OCI-LY7 (cell line): ENCODE measurements at regions of chr10 and their contacts with region 1.

Region 1: GRCh38 chr10:102917962-102918816 is at the start of gene CNNM2:
- DNase-seq: peak; percentile 100
- H3K4me3 ChIP-seq: peak within 1 kb of the TSS; percentile 96
- H3K27ac ChIP-seq: peak within 1 kb of the TSS; percentile 46
- H3K4me1 ChIP-seq: peaks cover 33% of the 10 kb centered on the region
- CTCF ChIP-seq: peak; percentile 52; the same call in 1 of the 2 replicates
- total RNA-seq, gene CNNM2: 5.8 and 7.2 TPM in 2 replicates

Region 2: DNA sequence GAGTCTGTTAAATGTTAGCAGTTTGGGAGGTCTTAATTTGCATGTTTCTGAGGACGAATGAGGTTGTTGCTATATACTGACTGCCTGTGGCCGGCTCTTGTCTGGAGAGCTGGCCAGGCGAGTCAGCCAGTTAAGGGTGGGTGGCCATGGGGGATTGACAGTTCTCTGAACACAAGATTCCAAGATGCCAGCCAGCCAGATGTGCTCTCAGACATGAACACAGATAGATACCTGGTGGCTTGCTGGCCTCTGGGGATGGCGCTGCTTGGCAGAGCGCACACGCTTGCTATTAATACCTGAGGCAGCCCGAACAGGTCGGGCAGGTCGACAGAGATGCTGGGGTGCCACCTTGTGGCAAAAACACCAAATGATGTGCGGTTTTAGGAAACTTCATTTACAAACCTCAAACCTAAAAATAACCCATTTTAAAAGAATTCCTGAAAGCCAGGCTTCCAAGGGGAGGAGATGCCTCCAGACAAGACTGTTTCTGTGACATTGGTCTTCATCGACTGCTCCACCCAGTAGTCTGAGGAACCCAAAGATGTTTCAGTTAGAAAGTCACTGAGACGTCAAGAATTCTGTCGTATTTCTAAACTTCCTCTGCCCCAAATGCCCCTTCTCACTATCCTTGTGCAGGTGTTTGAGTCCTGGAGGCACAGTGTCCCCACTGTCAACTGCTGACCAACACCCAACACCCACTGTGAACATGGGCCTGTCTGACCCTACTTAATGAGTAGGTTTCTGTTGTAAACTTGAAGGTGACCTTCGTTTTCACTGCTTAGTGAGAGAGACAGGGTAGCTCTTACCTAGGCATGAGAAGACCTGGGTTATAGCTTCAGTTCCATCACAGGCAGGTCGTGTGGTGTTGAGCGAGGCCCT is 151.5 kb after region 1 on chr10:
- CTCF ChIA-PET with region 1: no interaction called
- POLR2A ChIA-PET with region 1: interaction called, 6 read pairs
- intact Hi-C with region 1: loop called (anchors 1 kb)
- DNase-seq: peak; percentile 81
- H3K4me3 ChIP-seq: no peak overlapping the region
- H3K27ac ChIP-seq: peak overlapping the region; percentile 7
- H3K4me1 ChIP-seq: peaks cover 21% of the 10 kb centered on the region
- CTCF ChIP-seq: peak; percentile 95

Region 3: GRCh38 chr10:103192451-103193106 is 274.4 kb after region 1 on chr10:
- CTCF ChIA-PET with region 1: no interaction called
- POLR2A ChIA-PET with region 1: no interaction called
- intact Hi-C with region 1: loop called (anchors 5 kb)
- DNase-seq: peak; percentile 91
- H3K4me3 ChIP-seq: peak overlapping the region; percentile 91
- H3K27ac ChIP-seq: peak overlapping the region; percentile 77
- H3K4me1 ChIP-seq: peaks cover 43% of the 10 kb centered on the region
- CTCF ChIP-seq: no peak

Region 4: DNA sequence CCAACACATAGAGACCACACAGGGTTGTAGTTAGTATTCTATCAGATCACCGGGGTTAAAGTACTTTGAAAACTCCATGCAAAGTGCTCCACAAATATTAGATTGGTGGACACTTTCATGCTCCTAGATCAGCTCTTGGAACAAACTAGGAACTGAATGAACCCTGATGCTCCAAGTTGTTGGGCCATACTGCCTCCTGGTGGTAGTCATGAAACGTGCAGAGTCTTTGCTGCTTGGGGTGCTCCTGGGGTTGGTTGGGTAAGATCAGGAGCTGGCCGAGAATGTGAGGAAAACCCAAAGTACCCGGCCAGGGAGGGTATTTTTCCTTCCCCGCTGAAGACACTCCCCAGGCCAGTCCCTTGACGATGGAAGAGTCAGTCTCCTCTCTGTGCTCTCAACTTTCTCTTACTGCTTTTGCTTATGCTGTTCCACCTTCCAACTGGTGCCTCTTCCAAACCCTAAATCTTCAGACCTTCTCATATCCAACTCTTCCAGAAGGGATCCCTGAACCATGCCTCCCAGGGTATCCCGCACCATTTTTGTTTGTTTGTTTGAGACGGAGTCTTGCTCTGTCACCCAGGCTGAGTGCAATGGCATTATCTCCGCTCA is 326.6 kb after region 1 on chr10:
- CTCF ChIA-PET with region 1: interaction called, 6 read pairs
- POLR2A ChIA-PET with region 1: no interaction called
- intact Hi-C with region 1: loop called (anchors 1 kb)
- DNase-seq: peak; percentile 77
- H3K4me3 ChIP-seq: no peak overlapping the region
- H3K27ac ChIP-seq: no peak overlapping the region
- H3K4me1 ChIP-seq: peaks cover 8% of the 10 kb centered on the region
- CTCF ChIP-seq: peak; percentile 97

Region 5: DNA sequence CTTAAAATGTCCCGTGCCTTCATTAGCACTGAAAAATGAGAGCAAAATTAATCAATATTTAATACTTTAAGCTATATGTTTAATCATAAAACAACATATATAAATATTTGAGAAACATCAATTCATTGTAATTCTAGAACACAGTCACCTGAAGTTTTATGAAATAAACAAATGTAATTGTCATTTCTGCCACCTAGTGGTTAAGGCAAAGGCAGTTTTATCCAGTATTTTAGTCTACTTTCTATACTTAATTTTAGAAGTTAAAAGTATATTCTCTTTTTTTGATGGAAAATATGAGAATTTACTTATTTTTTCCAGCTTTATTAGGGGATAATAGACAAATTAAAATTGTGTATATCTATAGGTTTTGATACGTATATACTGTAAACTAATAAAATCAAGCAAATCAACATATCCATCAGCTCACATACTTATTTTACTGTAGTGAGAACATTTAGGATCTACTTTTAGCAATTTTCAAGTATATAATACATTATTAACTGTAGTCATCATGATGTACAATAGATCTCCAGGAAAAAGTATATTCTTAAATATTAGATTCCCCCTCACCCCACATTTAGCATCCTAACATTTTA is 415.8 kb after region 1 on chr10:
- CTCF ChIA-PET with region 1: no interaction called
- POLR2A ChIA-PET with region 1: interaction called, 3 read pairs
- intact Hi-C with region 1: loop called (anchors 5 kb)
- DNase-seq: peak; percentile 50
- H3K4me3 ChIP-seq: no peak overlapping the region
- H3K27ac ChIP-seq: no peak overlapping the region
- H3K4me1 ChIP-seq: no peaks in the 10 kb centered on the region
- CTCF ChIP-seq: peak; percentile 94

Region 6: DNA sequence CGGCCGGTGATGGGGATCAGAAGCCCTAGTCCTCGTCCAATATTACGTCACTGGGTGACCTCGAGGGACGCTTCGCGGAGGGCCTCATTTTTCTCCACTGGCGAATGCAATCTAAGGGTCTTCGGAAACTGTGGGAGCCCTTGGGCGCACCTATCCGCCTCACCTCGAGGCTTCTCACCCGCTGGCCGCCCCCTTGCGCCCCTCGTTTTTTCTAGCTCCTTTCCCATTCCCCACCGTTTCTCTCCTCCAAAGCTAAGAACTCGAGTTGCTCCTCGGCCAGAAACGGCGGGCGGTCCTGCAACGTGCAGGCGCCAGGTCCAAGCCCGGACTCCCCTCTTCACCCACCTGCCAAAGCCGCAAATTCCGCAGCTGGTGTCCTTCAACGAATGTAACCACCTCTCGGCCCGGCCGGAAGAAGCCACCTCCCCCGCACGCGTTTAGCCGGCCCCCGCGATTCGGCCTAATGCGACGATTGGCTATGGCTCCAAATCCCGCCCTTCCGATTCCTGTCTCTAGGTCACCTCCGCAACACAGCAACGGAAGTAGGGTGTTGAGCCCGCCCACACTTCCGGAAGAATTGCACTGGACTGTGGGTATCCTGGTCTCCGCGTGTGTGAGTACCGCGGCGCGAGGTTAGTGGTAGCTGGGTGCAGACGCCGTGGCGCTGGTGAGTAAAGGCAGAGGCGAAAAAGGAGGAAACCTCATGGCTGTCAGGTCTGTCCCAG is 478.0 kb after region 1 on chr10 and contains the starts of genes ATP5MK and PDCD11:
- CTCF ChIA-PET with region 1: no interaction called
- POLR2A ChIA-PET with region 1: no interaction called
- intact Hi-C with region 1: loop called (anchors 2 kb)
- DNase-seq: peak; percentile 99
- H3K4me3 ChIP-seq: peak within 1 kb of the TSS; percentile 89
- H3K27ac ChIP-seq: peak within 1 kb of the TSS; percentile 55
- H3K4me1 ChIP-seq: peaks cover 31% of the 10 kb centered on the region
- CTCF ChIP-seq: no peak; the same call in 1 of the 2 replicates
- total RNA-seq, gene ATP5MK: 74.7 and 117 TPM in 2 replicates
- total RNA-seq, gene PDCD11: 54.5 and 62.9 TPM in 2 replicates

Region 7: DNA sequence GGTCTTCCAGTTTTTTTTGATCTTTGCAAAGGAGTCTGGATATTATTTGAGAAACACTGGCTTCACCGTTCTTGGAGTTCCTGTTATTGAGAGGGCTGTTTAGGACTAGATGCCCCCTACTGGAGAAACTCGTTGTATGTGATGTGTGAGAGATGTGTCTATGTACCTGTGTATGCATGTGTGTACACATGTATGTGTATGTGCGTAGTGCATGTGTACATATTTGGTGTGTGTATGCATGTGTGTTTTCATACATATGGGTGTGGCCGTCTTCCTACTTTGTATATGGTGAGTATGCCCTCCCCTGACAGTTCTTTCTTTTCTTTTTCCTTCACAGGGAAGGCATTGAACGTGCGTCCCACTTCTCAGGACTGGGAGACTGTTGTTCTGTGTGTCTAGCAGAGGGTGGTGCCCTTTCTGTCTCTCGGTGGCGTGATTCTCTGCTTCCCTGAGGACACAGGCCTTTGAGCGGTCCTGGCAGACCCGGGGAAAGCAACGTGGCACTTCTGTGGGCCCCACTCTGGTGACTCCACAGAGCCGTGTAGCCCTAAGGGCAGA is 563.9 kb after region 1 on chr10:
- CTCF ChIA-PET with region 1: no interaction called
- POLR2A ChIA-PET with region 1: no interaction called
- intact Hi-C with region 1: loop called (anchors 5 kb)
- DNase-seq: peak; percentile 86
- H3K4me3 ChIP-seq: no peak overlapping the region
- H3K27ac ChIP-seq: no peak overlapping the region
- H3K4me1 ChIP-seq: peaks cover 10% of the 10 kb centered on the region
- CTCF ChIP-seq: peak; percentile 94